IMR-90 (cell line): ENCODE measurements at regions of chr6 and their contacts with region 1.

Region 1: GRCh38 chr6:136792410-136793262 is at the start of gene MAP3K5:
- DNase-seq: peak; percentile 85
- ATAC-seq: peak; percentile 74
- H3K4me3 ChIP-seq: peak within 1 kb of the TSS; percentile 95
- H3K27ac ChIP-seq: peak within 1 kb of the TSS; percentile 92
- H3K4me1 ChIP-seq: peaks cover 6% of the 10 kb centered on the region
- H3K27me3 ChIP-seq: no peaks in the 10 kb centered on the region
- CTCF ChIP-seq: peak; percentile 95
- POLR2A ChIP-seq: no peak; the same call in 1 of the 2 replicates
- RAD21 ChIP-seq: peak; percentile 91
- total RNA-seq, gene MAP3K5: 17.2 and 17.6 TPM in 2 replicates

Region 2: GRCh38 chr6:136289579-136290409 is 502.8 kb before region 1 on chr6 and contains the start of gene BCLAF1:
- CTCF ChIA-PET with region 1: no interaction called
- POLR2A ChIA-PET with region 1: no interaction called
- dilution Hi-C with region 1: no loop called
- in situ Hi-C with region 1: loop called (anchors 25 kb)
- intact Hi-C with region 1: loop called (anchors 5 kb)
- DNase-seq: peak; percentile 99
- ATAC-seq: peak; percentile 92
- H3K4me3 ChIP-seq: peak within 1 kb of the TSS; percentile 71
- H3K27ac ChIP-seq: peak within 1 kb of the TSS; percentile 96
- H3K4me1 ChIP-seq: peaks cover 5% of the 10 kb centered on the region
- H3K27me3 ChIP-seq: no peaks in the 10 kb centered on the region; the same call in 1 of the 2 replicates
- CTCF ChIP-seq: no peak
- POLR2A ChIP-seq: peak; percentile 98
- RAD21 ChIP-seq: no peak
- total RNA-seq, gene BCLAF1: 141 and 142 TPM in 2 replicates

Region 3: DNA sequence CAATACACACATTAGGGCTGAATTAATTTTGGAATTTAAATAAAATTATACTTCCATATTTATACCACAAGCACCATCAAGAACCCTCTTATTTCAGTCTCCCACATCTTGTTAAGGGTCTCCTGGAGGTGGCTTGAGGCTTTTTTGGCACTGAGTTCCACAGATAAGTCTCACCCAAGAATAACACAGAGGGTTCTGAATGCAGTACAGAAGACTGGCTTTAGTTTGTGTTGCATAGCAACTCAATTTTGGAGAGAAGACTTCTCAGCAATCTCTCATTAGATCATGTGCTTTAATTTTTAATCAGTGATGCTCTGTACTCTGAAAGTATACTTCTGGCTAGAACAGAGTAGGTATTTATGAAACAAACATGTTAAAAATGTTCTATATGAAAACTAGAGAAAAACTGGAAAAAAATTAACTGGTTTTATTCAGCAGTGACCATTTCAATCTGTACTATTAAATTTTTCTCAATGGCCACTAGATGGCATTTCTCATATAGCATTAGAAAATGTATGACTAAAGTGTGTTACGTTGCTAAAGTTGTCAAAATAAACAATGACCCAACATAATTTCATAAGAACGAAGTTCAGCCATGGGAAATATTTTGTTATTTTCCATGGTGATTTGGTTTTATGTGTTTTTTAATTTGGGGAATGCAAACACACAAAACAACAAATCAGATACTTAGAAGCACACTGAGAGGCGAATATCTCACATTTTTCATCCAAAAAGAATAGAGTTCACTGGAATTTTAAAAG is 209.7 kb before region 1 on chr6:
- CTCF ChIA-PET with region 1: interaction called, 5 read pairs
- POLR2A ChIA-PET with region 1: no interaction called
- dilution Hi-C with region 1: no loop called
- in situ Hi-C with region 1: no loop called
- intact Hi-C with region 1: loop called (anchors 1 kb)
- DNase-seq: peak; percentile 94
- ATAC-seq: peak; percentile 47
- H3K4me3 ChIP-seq: no peak overlapping the region
- H3K27ac ChIP-seq: 0 out of 2 replicates have a peak overlapping the region, but pooled peaks have one; percentile 29
- H3K4me1 ChIP-seq: peaks cover 11% of the 10 kb centered on the region
- H3K27me3 ChIP-seq: no peaks in the 10 kb centered on the region
- CTCF ChIP-seq: peak; percentile 73
- POLR2A ChIP-seq: no peak
- RAD21 ChIP-seq: peak; percentile 72

Region 4: GRCh38 chr6:136607932-136608772 is 184.5 kb before region 1 on chr6:
- CTCF ChIA-PET with region 1: interaction called, 10 read pairs
- POLR2A ChIA-PET with region 1: no interaction called
- dilution Hi-C with region 1: no loop called
- in situ Hi-C with region 1: no loop called
- intact Hi-C with region 1: loop called (anchors 1 kb)
- DNase-seq: peak; percentile 80
- ATAC-seq: peak; percentile 45
- H3K4me3 ChIP-seq: no peak overlapping the region
- H3K27ac ChIP-seq: peak overlapping the region; percentile 3; the same call in 1 of the 2 replicates
- H3K4me1 ChIP-seq: peaks cover 19% of the 10 kb centered on the region
- H3K27me3 ChIP-seq: no peaks in the 10 kb centered on the region
- CTCF ChIP-seq: peak; percentile 72
- POLR2A ChIP-seq: peak; percentile 29; the same call in 1 of the 2 replicates
- RAD21 ChIP-seq: peak; percentile 64

Region 5: GRCh38 chr6:136643850-136644596 is 148.6 kb before region 1 on chr6:
- CTCF ChIA-PET with region 1: interaction called, 41 read pairs
- POLR2A ChIA-PET with region 1: interaction called, 6 read pairs
- dilution Hi-C with region 1: no loop called
- in situ Hi-C with region 1: loop called (anchors 5 kb)
- intact Hi-C with region 1: loop called (anchors 1 kb)
- DNase-seq: peak; percentile 83
- ATAC-seq: peak; percentile 69
- H3K4me3 ChIP-seq: no peak overlapping the region
- H3K27ac ChIP-seq: no peak overlapping the region
- H3K4me1 ChIP-seq: peaks cover 13% of the 10 kb centered on the region
- H3K27me3 ChIP-seq: no peaks in the 10 kb centered on the region
- CTCF ChIP-seq: peak; percentile 83
- POLR2A ChIP-seq: no peak
- RAD21 ChIP-seq: peak; percentile 86

Region 6: DNA sequence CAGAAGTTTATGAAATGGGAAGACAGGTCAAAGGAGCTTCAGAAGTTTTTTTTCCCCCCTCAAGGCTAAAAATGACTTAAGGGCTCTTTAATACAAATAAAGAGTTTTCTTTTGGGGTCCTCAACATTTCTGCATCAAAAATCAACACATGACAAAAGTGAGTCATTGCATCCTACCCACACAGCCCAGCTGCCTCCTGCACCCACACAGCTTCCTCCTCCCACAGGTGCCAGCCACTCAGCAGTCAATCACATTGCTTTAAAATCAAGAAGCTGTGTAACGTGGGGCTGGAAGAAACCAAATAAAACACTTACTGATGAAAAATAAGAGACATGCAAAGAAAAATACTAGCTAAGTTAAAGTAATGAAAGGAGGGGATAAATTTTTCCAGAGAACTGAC is 68.9 kb before region 1 on chr6:
- CTCF ChIA-PET with region 1: no interaction called
- POLR2A ChIA-PET with region 1: no interaction called
- dilution Hi-C with region 1: no loop called
- in situ Hi-C with region 1: no loop called
- intact Hi-C with region 1: loop called (anchors 5 kb)
- DNase-seq: no peak
- ATAC-seq: no peak
- H3K4me3 ChIP-seq: no peak overlapping the region
- H3K27ac ChIP-seq: no peak overlapping the region
- H3K4me1 ChIP-seq: peaks cover 2% of the 10 kb centered on the region; the same call in 1 of the 2 replicates
- H3K27me3 ChIP-seq: no peaks in the 10 kb centered on the region
- CTCF ChIP-seq: no peak
- POLR2A ChIP-seq: no peak
- RAD21 ChIP-seq: no peak

Region 7: DNA sequence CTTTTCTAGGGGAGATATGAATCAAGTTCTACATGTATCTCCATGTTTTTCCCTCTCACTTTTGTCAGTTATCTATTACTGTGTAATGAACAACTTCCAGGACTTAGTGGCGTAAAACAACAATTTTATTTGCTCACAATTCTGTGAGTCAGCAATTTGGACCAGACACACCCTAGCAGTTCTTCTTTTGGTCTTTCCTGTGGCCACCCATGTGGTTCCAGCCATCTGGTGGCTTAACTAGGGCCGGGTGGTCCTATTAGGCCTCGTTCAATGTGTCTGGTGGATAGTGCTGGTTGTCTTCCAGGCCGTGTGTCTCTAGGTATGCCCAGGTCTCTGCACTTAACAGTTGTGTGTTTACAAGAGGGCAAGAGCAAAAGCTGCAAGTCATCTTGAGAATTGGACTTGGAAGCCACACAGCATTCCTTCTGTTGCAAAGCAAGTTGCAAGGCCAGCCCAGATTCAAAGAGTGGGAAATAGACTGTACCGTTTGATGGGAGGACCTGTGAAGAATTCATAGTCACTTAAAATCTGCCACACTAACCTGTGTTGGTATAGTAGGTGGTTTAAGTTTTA is 108.7 kb after region 1 on chr6:
- CTCF ChIA-PET with region 1: no interaction called
- POLR2A ChIA-PET with region 1: no interaction called
- dilution Hi-C with region 1: no loop called
- in situ Hi-C with region 1: no loop called
- intact Hi-C with region 1: no loop called
- DNase-seq: no peak
- ATAC-seq: no peak
- H3K4me3 ChIP-seq: no peak overlapping the region
- H3K27ac ChIP-seq: no peak overlapping the region
- H3K4me1 ChIP-seq: peaks cover 2% of the 10 kb centered on the region; the same call in 1 of the 2 replicates
- H3K27me3 ChIP-seq: no peaks in the 10 kb centered on the region
- CTCF ChIP-seq: no peak
- POLR2A ChIP-seq: no peak
- RAD21 ChIP-seq: no peak